ENCODE measurements at regions of chr7 and their contacts with region 1.

Region 1: GRCh38 chr7:112965513-112965912 is 121.1 kb downstream of the GPR85 start:
- DNase-seq: no peak
- ATAC-seq: no peak
- H3K4me3 ChIP-seq: no peak overlapping the region
- H3K27ac ChIP-seq: no peak overlapping the region
- H3K4me1 ChIP-seq: peaks cover 0 to 14% (median 0%) of the 10 kb centered on the region in 9 donors
- H3K27me3 ChIP-seq: no peaks in the 10 kb centered on the region
- CTCF ChIP-seq: no peak

Region 2: DNA sequence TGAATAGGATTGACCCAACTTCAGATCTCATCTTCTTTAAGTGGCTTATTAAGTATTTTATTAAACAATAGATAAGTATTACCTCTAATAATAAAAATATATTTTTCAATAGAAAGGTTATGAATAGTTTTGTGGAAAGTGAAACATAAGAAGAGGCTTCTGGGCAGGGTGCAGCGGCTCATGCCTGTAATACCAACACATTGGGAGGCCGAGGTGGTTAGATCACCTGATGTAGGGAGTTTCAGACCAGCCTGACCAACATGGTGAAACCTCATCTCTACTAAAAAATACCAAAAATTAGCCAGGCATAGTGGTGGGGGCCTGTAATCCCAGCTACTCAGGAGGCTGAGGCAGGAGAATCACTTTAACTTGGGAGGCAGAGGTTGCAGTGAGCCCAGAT is 94.6 kb after region 1 on chr7:
- intact Hi-C with region 1: loop called in 1 of 10 experiments (anchors 10 kb)
- DNase-seq: no peak
- ATAC-seq: no peak
- H3K4me3 ChIP-seq: no peak overlapping the region
- H3K27ac ChIP-seq: no peak overlapping the region
- H3K4me1 ChIP-seq: no peaks in the 10 kb centered on the region
- H3K27me3 ChIP-seq: no peaks in the 10 kb centered on the region
- CTCF ChIP-seq: no peak